Activated CD8-positive, alpha-beta T cell treated with anti-CD3 and anti-CD28 coated beads, Interleukin-2, amount 10 ng/mL, durations not matched to agents 7 days and 5 days (primary cell): ENCODE measurements at regions of chr18 and their contacts with region 1.

Region 1: GRCh38 chr18:34857320-34857719 is 147.2 kb downstream of the DTNA start:
- DNase-seq: no peak
- ATAC-seq: no peak
- H3K4me3 Mint-ChIP-seq: no peak overlapping the region
- H3K27ac Mint-ChIP-seq: no peak overlapping the region
- H3K4me1 Mint-ChIP-seq: peaks cover 17% of the 10 kb centered on the region
- H3K27me3 Mint-ChIP-seq: peaks cover 2% of the 10 kb centered on the region

Region 2: GRCh38 chr18:34821749-34822148 is 35.6 kb before region 1 on chr18:
- CTCF ChIA-PET with region 1: no interaction called
- POLR2A ChIA-PET with region 1: no interaction called
- DNase-seq: no peak
- ATAC-seq: no peak
- H3K4me3 Mint-ChIP-seq: no peak overlapping the region
- H3K27ac Mint-ChIP-seq: no peak overlapping the region
- H3K4me1 Mint-ChIP-seq: no peaks in the 10 kb centered on the region
- H3K27me3 Mint-ChIP-seq: peaks cover 5% of the 10 kb centered on the region

Region 3: GRCh38 chr18:34867520-34867919 is 10.2 kb after region 1 on chr18:
- CTCF ChIA-PET with region 1: interaction called, 13 read pairs
- POLR2A ChIA-PET with region 1: no interaction called
- DNase-seq: no peak
- ATAC-seq: no peak
- H3K4me3 Mint-ChIP-seq: no peak overlapping the region
- H3K27ac Mint-ChIP-seq: no peak overlapping the region
- H3K4me1 Mint-ChIP-seq: peaks cover 48% of the 10 kb centered on the region
- H3K27me3 Mint-ChIP-seq: no peaks in the 10 kb centered on the region